GM12878 (cell line): ENCODE measurements at regions of chr2 and their contacts with region 1.

Region 1: DNA sequence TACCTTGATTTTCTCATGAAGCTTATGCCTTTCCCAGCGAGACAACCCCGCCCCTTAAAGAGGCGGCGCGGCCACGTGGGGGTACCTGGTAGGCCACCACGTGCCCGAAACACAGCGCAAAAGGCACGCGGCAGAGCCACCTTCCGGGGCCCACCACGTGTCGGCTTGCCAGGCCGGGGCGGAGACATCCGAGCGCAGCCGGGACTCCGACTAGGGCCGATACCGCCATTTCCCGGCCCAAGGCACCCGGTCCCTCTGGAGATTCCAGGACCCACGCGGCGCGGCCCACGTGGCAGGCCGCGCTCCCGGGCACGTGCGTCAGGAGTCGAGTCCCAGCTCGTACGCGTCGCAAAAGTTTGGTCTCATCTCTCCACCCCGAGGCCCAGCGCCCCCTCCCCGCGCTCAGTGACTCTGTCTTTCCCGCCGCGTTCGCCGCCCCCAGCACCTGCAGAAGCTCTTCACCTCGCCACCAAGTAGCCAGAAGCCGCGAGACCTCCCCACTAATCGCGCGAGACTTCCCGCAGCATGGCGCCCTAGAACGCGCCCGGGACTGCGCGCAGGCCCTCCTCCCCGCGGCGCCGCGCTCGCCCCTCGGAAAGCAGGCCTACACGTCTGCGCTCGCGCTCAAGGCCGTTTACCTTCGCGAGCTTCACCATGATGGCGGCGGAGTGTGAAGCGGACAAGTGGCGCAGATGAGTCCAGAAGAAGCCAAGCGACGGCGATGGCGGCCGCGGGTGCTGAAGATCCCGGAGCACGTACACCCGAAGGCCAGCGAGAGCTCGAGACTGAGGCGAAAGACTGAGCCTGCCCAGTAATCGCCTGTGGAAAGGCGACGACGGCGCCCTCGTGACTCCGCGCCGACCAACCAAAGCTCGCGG is at the start of gene NCL:
- DNase-seq: peak; percentile 91
- ATAC-seq: peak; percentile 95
- H3K4me3 ChIP-seq: peak within 1 kb of the TSS; percentile 82
- H3K27ac ChIP-seq: peak within 1 kb of the TSS; percentile 99
- H3K4me1 ChIP-seq: peaks cover 13% of the 10 kb centered on the region
- H3K27me3 ChIP-seq: no peaks in the 10 kb centered on the region
- CTCF ChIP-seq: no peak
- EP300 ChIP-seq: no peak
- POLR2A ChIP-seq: peak; percentile 99
- RAD21 ChIP-seq: no peak
- polyA plus RNA-seq, gene NCL: 123 to 251 TPM

Region 2: GRCh38 chr2:231394211-231395141 is 69.5 kb before region 1 on chr2:
- CTCF ChIA-PET with region 1: no interaction called
- POLR2A ChIA-PET with region 1: interaction called, 15 read pairs
- RAD21 ChIA-PET with region 1: interaction called, 3 read pairs
- SMC1A ChIA-PET with region 1: no interaction called
- in situ Hi-C with region 1: no loop called
- intact Hi-C with region 1: no loop called
- DNase-seq: peak; percentile 87
- ATAC-seq: peak; percentile 66
- H3K4me3 ChIP-seq: peak overlapping the region; percentile 65
- H3K27ac ChIP-seq: peak overlapping the region; percentile 95
- H3K4me1 ChIP-seq: peaks cover 58% of the 10 kb centered on the region
- H3K27me3 ChIP-seq: no peaks in the 10 kb centered on the region
- CTCF ChIP-seq: peak; percentile 52 to 67 (median 61)
- EP300 ChIP-seq: peak in 1 of 2 experiments; percentile 53; a peak in 1 of 4 replicates
- POLR2A ChIP-seq: peak; percentile 76
- RAD21 ChIP-seq: peak; percentile 47

Region 3: GRCh38 chr2:231452799-231453508 is 11.0 kb before region 1 on chr2:
- CTCF ChIA-PET with region 1: interaction called, 27 read pairs
- POLR2A ChIA-PET with region 1: interaction called, 20 read pairs
- RAD21 ChIA-PET with region 1: interaction called, 8 read pairs
- SMC1A ChIA-PET with region 1: interaction called, 8 read pairs
- in situ Hi-C with region 1: no loop called
- intact Hi-C with region 1: no loop called
- DNase-seq: no peak
- ATAC-seq: peak; percentile 13
- H3K4me3 ChIP-seq: no peak overlapping the region
- H3K27ac ChIP-seq: no peak overlapping the region
- H3K4me1 ChIP-seq: no peaks in the 10 kb centered on the region
- H3K27me3 ChIP-seq: no peaks in the 10 kb centered on the region
- CTCF ChIP-seq: no peak
- EP300 ChIP-seq: no peak
- POLR2A ChIP-seq: peak; percentile 65
- RAD21 ChIP-seq: no peak

Region 4: GRCh38 chr2:231475965-231476364 is 12.0 kb after region 1 on chr2:
- CTCF ChIA-PET with region 1: interaction called, 98 read pairs
- POLR2A ChIA-PET with region 1: interaction called, 48 read pairs
- RAD21 ChIA-PET with region 1: interaction called, 6 read pairs
- SMC1A ChIA-PET with region 1: interaction called, 17 read pairs
- in situ Hi-C with region 1: no loop called
- intact Hi-C with region 1: no loop called
- DNase-seq: no peak
- ATAC-seq: no peak
- H3K4me3 ChIP-seq: no peak overlapping the region
- H3K27ac ChIP-seq: no peak overlapping the region
- H3K4me1 ChIP-seq: no peaks in the 10 kb centered on the region
- H3K27me3 ChIP-seq: no peaks in the 10 kb centered on the region
- CTCF ChIP-seq: no peak
- EP300 ChIP-seq: no peak
- POLR2A ChIP-seq: no peak
- RAD21 ChIP-seq: no peak

Region 5: DNA sequence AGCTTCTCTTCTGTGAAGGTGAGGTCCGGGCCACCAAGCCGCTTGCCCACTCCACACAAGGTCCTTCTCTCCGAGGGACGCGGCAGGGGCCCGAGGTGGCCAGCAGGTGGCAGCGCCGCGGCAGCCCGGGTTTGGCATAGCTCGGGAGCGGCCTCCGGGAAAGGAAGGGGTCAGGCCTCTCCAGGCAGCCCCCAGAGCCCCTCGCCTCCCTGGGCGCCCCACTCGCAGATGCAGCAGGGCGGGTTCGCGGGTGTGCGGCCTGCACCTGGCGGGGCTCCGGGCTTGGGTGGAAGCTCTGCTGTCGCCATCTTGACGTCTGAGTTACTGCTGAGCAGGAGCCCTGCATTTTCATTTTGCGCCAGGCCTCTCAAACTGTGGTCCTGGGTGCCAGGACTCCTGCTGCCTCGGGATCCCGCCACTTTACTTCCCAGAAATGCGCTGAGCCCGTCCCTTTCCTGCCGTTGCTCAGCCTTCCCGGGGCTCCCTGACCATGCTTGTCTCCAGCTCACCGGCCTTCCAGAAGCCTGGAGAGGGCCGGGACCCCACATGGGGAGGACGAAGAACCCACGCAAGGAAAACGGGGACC is 19.0 kb after region 1 on chr2:
- CTCF ChIA-PET with region 1: interaction called, 98 read pairs
- POLR2A ChIA-PET with region 1: interaction called, 48 read pairs
- RAD21 ChIA-PET with region 1: interaction called, 11 read pairs
- SMC1A ChIA-PET with region 1: interaction called, 17 read pairs
- in situ Hi-C with region 1: no loop called
- intact Hi-C with region 1: loop called (anchors 2 kb)
- DNase-seq: no peak
- ATAC-seq: peak; percentile 90
- H3K4me3 ChIP-seq: peak overlapping the region; percentile 79
- H3K27ac ChIP-seq: peak overlapping the region; percentile 93
- H3K4me1 ChIP-seq: peaks cover 15% of the 10 kb centered on the region
- H3K27me3 ChIP-seq: no peaks in the 10 kb centered on the region
- CTCF ChIP-seq: peak; percentile 85 to 95 (median 91)
- EP300 ChIP-seq: no peak
- POLR2A ChIP-seq: peak; percentile 80
- RAD21 ChIP-seq: peak; percentile 48; the same call in 1 of the 2 replicates

Region 6: GRCh38 chr2:231514103-231514950 is 50.4 kb after region 1 on chr2:
- CTCF ChIA-PET with region 1: interaction called, 6 read pairs
- POLR2A ChIA-PET with region 1: interaction called, 12 read pairs
- RAD21 ChIA-PET with region 1: no interaction called
- SMC1A ChIA-PET with region 1: no interaction called
- in situ Hi-C with region 1: no loop called
- intact Hi-C with region 1: no loop called
- DNase-seq: peak; percentile 81
- ATAC-seq: peak; percentile 100
- H3K4me3 ChIP-seq: peak overlapping the region; percentile 91
- H3K27ac ChIP-seq: peak overlapping the region; percentile 82
- H3K4me1 ChIP-seq: peaks cover 9% of the 10 kb centered on the region
- H3K27me3 ChIP-seq: no peaks in the 10 kb centered on the region
- CTCF ChIP-seq: no peak
- EP300 ChIP-seq: no peak
- POLR2A ChIP-seq: peak; percentile 97
- RAD21 ChIP-seq: no peak

Region 7: GRCh38 chr2:231530091-231531011 is 66.4 kb after region 1 on chr2 and contains the start of gene NMUR1:
- CTCF ChIA-PET with region 1: no interaction called
- POLR2A ChIA-PET with region 1: no interaction called
- RAD21 ChIA-PET with region 1: no interaction called
- SMC1A ChIA-PET with region 1: no interaction called
- in situ Hi-C with region 1: no loop called
- intact Hi-C with region 1: no loop called
- DNase-seq: no peak
- ATAC-seq: peak; percentile 97
- H3K4me3 ChIP-seq: peak within 1 kb of the TSS; percentile 41; the same call in 1 of the 2 replicates
- H3K27ac ChIP-seq: no peak within 1 kb of the TSS
- H3K4me1 ChIP-seq: peaks cover 5% of the 10 kb centered on the region
- H3K27me3 ChIP-seq: no peaks in the 10 kb centered on the region
- CTCF ChIP-seq: peak; percentile 71 to 85 (median 75); a peak in 5 of 6 replicates
- EP300 ChIP-seq: no peak
- POLR2A ChIP-seq: no peak
- RAD21 ChIP-seq: peak; percentile 88
- polyA plus RNA-seq, gene NMUR1: 0.02 TPM in 1 of 2 experiments, not detected in the other

Region 8: GRCh38 chr2:231545105-231545902 is 81.4 kb after region 1 on chr2:
- CTCF ChIA-PET with region 1: no interaction called
- POLR2A ChIA-PET with region 1: interaction called, 7 read pairs
- RAD21 ChIA-PET with region 1: no interaction called
- SMC1A ChIA-PET with region 1: no interaction called
- in situ Hi-C with region 1: no loop called
- intact Hi-C with region 1: loop called (anchors 5 kb)
- DNase-seq: peak; percentile 98
- ATAC-seq: peak; percentile 99
- H3K4me3 ChIP-seq: peak overlapping the region; percentile 43; the same call in 1 of the 2 replicates
- H3K27ac ChIP-seq: peak overlapping the region; percentile 97
- H3K4me1 ChIP-seq: peaks cover 30% of the 10 kb centered on the region
- H3K27me3 ChIP-seq: no peaks in the 10 kb centered on the region
- CTCF ChIP-seq: no peak
- EP300 ChIP-seq: peak; percentile 89 to 94
- POLR2A ChIP-seq: peak; percentile 96
- RAD21 ChIP-seq: no peak; the same call in 1 of the 2 replicates